HCT116 (cell line): ENCODE measurements at regions of chr15 and their contacts with region 1.

Region 1: GRCh38 chr15:64731012-64731806 is 44.2 kb downstream of the RBPMS2 start:
- DNase-seq: peak; percentile 75
- ATAC-seq: peak; percentile 92
- H3K4me3 ChIP-seq: no peak overlapping the region
- H3K27ac ChIP-seq: no peak overlapping the region
- H3K4me1 ChIP-seq: peaks cover 0 to 4% of the 10 kb centered on the region in 2 experiments; a peak in 1 of 4 replicates
- H3K27me3 ChIP-seq: no peaks in the 10 kb centered on the region
- CTCF ChIP-seq: peak; percentile 82 to 95 (median 93)
- POLR2A ChIP-seq: no peak
- RAD21 ChIP-seq: peak; percentile 99

Region 2: GRCh38 chr15:64430000-64430735 is 301.0 kb before region 1 on chr15:
- CTCF ChIA-PET with region 1: interaction called, 4 read pairs
- POLR2A ChIA-PET with region 1: no interaction called
- RAD21 ChIA-PET with region 1: no interaction called
- intact Hi-C with region 1: loop called (anchors 5 kb)
- DNase-seq: no peak
- ATAC-seq: no peak
- H3K4me3 ChIP-seq: no peak overlapping the region
- H3K27ac ChIP-seq: no peak overlapping the region
- H3K4me1 ChIP-seq: peaks cover 7 to 8% of the 10 kb centered on the region in 2 experiments; a peak in 2 of 4 replicates
- H3K27me3 ChIP-seq: no peaks in the 10 kb centered on the region
- CTCF ChIP-seq: no peak
- POLR2A ChIP-seq: no peak
- RAD21 ChIP-seq: no peak

Region 3: DNA sequence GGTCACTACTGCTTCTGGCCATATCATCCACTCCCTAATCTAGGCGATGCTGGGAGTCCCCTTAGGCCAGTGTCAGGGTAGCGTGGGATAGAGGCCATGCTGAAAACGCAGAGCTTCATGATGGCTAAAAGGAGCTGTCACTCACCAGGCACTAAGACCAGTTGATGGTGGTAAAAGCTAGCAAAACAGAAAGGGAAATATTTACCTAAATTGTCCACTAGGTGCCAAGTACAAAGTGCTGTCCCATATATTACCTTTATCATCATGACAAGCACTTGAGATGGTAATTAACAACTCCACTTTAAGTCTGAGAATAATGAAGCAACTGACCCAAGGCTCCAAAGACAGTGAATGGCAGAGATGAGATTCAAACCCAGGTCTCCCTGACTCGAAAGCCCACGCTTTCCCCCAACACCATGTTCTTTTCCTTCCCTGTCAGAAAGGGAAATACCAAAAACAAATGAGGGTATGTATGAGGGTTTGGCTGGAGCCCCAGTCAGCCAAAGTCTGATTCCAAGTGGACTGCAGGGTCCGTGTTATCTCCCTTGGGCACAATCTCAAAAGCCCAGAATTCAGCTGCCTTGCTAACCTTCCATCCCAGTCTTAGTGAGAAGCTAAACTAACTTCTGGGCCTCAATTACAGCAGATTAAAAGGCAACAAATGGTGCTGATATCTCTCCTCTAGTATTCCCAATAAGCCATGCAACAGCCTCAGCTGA is 40.5 kb before region 1 on chr15:
- CTCF ChIA-PET with region 1: interaction called, 32 read pairs
- POLR2A ChIA-PET with region 1: no interaction called
- RAD21 ChIA-PET with region 1: interaction called, 4 to 6 read pairs
- intact Hi-C with region 1: loop called (anchors 1 kb)
- DNase-seq: no peak
- ATAC-seq: peak; percentile 56; the same call in 1 of the 2 replicates
- H3K4me3 ChIP-seq: no peak overlapping the region
- H3K27ac ChIP-seq: no peak overlapping the region
- H3K4me1 ChIP-seq: no peaks in the 10 kb centered on the region
- H3K27me3 ChIP-seq: no peaks in the 10 kb centered on the region
- CTCF ChIP-seq: peak in 2 of 3 experiments; percentile 17 to 41; a peak in 2 of 6 replicates
- POLR2A ChIP-seq: no peak
- RAD21 ChIP-seq: 0 out of 2 replicates have a peak, but pooled peaks have one; percentile 6

Region 4: DNA sequence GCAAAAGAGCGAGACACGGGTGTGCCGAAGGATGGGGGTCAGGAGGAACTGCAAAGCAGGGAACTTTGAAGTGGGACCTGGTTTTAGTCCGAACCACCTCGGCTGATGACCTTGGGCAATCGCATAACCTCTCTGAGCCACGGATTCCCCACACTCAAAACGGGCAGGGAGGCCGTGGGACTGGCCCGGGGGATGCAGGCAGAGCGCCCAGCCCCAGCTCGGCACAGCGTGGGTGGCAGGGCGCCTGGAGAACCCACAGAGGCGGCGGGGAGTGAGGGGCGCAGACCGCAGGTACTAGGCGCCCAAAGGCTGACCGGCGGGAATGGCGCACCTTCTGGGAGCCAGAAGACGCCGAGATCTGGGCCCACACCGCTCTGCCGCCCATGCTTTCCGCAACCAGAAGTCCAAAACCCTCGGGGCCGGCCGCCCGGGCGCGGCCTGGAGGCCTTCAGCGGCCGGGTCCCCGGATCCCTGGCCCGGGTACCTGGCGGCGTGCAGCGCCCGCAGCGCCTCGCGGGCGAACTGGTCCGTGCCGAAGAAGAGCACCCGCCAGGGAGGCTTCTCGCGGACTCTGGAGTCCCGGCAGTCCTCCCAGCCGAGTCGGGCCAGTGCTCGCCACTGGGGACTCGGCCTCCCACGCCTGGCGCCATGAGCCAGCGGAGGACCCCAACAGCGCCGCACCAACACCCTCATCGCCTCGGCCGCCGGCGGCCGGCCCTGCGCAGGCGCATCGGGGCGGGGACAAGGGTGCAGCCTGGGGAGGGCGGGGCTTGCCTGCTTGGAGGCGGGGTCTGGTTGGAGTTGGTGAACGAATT is 297.9 kb after region 1 on chr15 and contains the start of gene MTFMT:
- CTCF ChIA-PET with region 1: interaction called, 3 read pairs
- POLR2A ChIA-PET with region 1: no interaction called
- RAD21 ChIA-PET with region 1: no interaction called
- intact Hi-C with region 1: loop called (anchors 10 kb)
- DNase-seq: peak; percentile 53
- ATAC-seq: peak; percentile 82
- H3K4me3 ChIP-seq: peak within 1 kb of the TSS; percentile 92 to 96
- H3K27ac ChIP-seq: peak within 1 kb of the TSS; percentile 72
- H3K4me1 ChIP-seq: peaks cover 7 to 30% of the 10 kb centered on the region in 2 experiments; a peak in 3 of 4 replicates
- H3K27me3 ChIP-seq: no peaks in the 10 kb centered on the region
- CTCF ChIP-seq: no peak
- POLR2A ChIP-seq: peak; percentile 92
- RAD21 ChIP-seq: no peak
- total RNA-seq, gene MTFMT: 30.4 TPM